Endothelial cell of umbilical vein (primary cell): ENCODE measurements at regions of chr1 and their contacts with region 1.

Region 1: DNA sequence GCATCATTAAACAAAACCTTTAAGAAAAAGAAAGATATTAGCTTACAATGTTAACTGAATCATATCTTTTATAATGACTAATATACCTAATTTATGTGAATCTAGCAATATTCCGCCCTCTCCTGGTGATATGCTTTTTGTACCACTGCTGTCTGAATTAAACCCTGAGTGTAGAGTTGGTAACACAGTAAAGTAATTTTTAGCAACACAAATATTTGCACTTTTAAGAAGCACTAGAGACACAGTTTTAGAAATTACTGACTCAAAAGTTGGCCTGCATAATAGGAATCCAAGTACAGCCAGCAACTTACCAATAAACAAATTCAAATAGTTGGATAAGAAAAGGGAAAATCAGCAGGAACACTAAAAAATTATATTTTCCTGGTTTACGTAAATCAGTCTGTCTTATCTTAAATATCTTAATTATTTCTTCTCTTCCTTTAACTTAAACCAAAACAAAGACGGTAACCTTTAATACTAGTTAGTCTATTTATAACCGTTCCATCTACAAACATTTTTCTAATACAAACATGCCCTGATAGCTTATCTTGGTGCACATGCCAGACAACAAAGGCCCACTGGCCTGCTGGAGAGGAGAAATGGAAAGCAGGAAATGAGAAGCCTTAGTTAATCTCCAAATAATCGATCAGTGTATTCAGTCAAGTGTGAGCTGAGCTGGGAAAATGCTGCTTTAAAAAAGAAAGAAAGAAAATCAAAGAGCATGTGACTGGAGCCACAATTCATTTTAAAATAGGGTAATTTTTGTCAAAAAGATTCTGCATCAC is 246.0 kb downstream of the RERE start:
- DNase-seq: peak; percentile 94
- H3K4me3 ChIP-seq: peak overlapping the region in 1 of 3 experiments; percentile 19
- H3K27ac ChIP-seq: peak overlapping the region; percentile 93
- H3K4me1 ChIP-seq: peaks cover 27% of the 10 kb centered on the region
- H3K27me3 ChIP-seq: no peaks in the 10 kb centered on the region
- CTCF ChIP-seq: peak; percentile 28 to 61
- POLR2A ChIP-seq: peak; percentile 31

Region 2: GRCh38 chr1:8409106-8409505 is 162.3 kb before region 1 on chr1:
- CTCF ChIA-PET with region 1: interaction called, 10 read pairs
- POLR2A ChIA-PET with region 1: no interaction called
- dilution Hi-C with region 1: no loop called
- intact Hi-C with region 1: no loop called
- DNase-seq: peak; percentile 76
- H3K4me3 ChIP-seq: no peak overlapping the region
- H3K27ac ChIP-seq: peak overlapping the region; percentile 62
- H3K4me1 ChIP-seq: peaks cover 53% of the 10 kb centered on the region
- H3K27me3 ChIP-seq: no peaks in the 10 kb centered on the region
- CTCF ChIP-seq: peak; percentile 37 to 42
- POLR2A ChIP-seq: no peak

Region 3: DNA sequence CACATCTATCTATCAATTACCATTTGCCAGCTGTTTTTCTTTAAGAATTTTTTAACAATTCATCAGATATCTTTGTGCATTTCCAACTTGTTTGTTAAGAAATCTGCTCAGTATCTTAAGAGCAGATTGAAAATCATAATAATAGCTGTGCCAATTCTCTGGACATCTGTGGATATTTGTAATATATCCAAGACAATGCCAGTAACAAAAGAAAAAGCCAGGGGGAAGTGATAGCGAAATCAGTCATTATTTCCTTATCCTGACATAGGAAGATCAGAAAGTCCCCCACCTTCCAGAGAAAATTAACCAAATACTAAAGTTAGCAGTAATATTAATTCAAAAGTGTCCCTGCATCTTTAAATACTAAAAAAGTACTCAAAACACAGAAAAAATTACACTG is 28.9 kb after region 1 on chr1:
- CTCF ChIA-PET with region 1: interaction called, 10 read pairs
- POLR2A ChIA-PET with region 1: no interaction called
- dilution Hi-C with region 1: no loop called
- intact Hi-C with region 1: loop called (anchors 1 kb)
- DNase-seq: peak; percentile 94
- H3K4me3 ChIP-seq: no peak overlapping the region
- H3K27ac ChIP-seq: peak overlapping the region; percentile 84
- H3K4me1 ChIP-seq: peaks cover 50% of the 10 kb centered on the region
- H3K27me3 ChIP-seq: no peaks in the 10 kb centered on the region
- CTCF ChIP-seq: no peak
- POLR2A ChIP-seq: no peak

Region 4: GRCh38 chr1:8712413-8713231 is 141.2 kb after region 1 on chr1:
- CTCF ChIA-PET with region 1: no interaction called
- POLR2A ChIA-PET with region 1: no interaction called
- dilution Hi-C with region 1: no loop called
- intact Hi-C with region 1: loop called (anchors 1 kb)
- DNase-seq: peak; percentile 96
- H3K4me3 ChIP-seq: peak overlapping the region in 1 of 3 experiments; percentile 30
- H3K27ac ChIP-seq: peak overlapping the region; percentile 94
- H3K4me1 ChIP-seq: peaks cover 33% of the 10 kb centered on the region
- H3K27me3 ChIP-seq: no peaks in the 10 kb centered on the region
- CTCF ChIP-seq: no peak
- POLR2A ChIP-seq: no peak

Region 5: GRCh38 chr1:8848663-8849386 is 277.4 kb after region 1 on chr1:
- CTCF ChIA-PET with region 1: interaction called, 15 read pairs
- POLR2A ChIA-PET with region 1: no interaction called
- dilution Hi-C with region 1: no loop called
- intact Hi-C with region 1: no loop called
- DNase-seq: peak; percentile 94
- H3K4me3 ChIP-seq: no peak overlapping the region
- H3K27ac ChIP-seq: no peak overlapping the region
- H3K4me1 ChIP-seq: peaks cover 4% of the 10 kb centered on the region
- H3K27me3 ChIP-seq: no peaks in the 10 kb centered on the region
- CTCF ChIP-seq: peak; percentile 85 to 99
- POLR2A ChIP-seq: no peak